IMR-90 (cell line): ENCODE measurements at regions of chr7 and their contacts with region 1.

Region 1: DNA sequence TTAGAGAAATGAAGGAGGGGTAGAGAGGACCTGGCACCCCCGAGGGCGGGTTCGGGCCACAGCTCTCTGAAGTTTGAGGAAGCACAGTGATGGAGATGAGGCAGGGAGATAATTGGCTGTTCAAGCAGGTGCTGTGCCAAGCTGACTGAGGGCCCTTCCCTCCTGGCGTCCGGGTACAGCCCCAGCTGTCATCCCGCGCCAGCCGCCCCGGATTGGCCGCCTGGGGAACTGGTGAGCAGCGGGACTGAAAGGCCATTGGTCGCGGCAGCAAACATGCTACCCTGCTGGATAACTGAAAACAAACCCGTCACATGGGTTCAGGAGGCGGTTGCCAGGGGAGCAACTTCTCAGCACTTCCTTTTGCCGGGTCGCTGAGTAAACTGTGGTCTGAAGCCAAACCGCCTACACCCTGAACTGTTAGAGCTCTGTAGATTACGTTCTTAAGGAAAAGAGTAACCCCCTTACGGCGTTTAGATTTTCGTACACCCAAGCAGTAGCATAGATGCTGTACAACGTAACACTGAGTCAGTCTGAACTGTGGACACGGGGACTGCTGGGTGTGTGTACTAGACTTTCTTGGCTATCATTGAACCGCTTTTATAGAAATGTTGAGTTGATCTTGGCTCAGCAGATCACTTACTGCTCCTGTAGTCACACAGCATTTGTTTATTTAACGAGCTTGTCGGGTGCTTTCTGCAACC is 1.3 kb downstream of the INSIG1 start:
- DNase-seq: peak; percentile 98
- ATAC-seq: peak; percentile 69
- H3K4me3 ChIP-seq: peak overlapping the region; percentile 55
- H3K27ac ChIP-seq: no peak overlapping the region
- H3K4me1 ChIP-seq: peaks cover 4% of the 10 kb centered on the region
- H3K27me3 ChIP-seq: no peaks in the 10 kb centered on the region
- CTCF ChIP-seq: no peak
- POLR2A ChIP-seq: peak; percentile 55
- RAD21 ChIP-seq: no peak

Region 2: DNA sequence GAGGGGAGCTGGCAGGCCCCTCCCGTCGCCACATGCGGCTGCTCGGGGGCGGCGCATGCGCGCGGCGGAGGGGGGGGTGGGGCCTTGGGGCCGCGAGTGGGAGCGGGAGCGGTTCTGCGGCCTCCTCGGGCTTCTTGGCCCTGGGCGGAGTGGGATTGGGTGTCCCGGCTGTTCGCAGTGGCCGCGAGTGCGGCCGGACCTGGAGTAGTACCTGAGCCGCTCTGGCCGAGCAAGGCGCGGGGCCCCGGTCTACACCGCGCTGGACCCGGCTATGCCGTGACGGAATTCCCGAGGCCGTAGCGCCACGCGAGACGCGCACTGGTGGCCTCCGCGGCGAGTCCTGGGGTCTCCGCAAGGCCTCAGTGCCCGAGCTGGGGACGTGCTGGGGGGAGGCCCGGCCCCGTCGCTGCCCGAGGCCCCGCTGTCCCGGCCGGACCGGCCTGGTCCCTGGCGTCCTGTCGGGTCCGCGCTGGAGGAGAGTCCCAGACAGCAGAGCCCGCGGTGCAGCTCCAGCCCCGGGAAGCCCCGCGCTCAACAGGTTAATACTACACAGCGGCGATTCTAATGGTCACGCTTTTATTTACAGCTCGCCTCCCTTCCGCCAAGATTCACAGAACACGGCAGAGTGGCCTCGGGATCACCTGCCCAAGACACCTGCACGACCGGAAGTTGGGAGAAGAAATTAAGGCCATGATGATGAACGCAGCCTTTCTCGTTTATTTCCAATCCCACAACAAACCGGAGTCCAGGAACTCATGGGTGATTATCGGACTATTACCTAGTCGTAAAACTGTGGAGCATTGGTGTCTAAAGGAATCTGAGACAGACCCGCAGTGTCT is 295.4 kb before region 1 on chr7:
- CTCF ChIA-PET with region 1: no interaction called
- POLR2A ChIA-PET with region 1: no interaction called
- dilution Hi-C with region 1: no loop called
- in situ Hi-C with region 1: no loop called
- intact Hi-C with region 1: loop called (anchors 1 kb)
- DNase-seq: peak; percentile 71
- ATAC-seq: peak; percentile 94
- H3K4me3 ChIP-seq: peak overlapping the region; percentile 80
- H3K27ac ChIP-seq: peak overlapping the region; percentile 81
- H3K4me1 ChIP-seq: 0 out of 2 replicates have a peak, but pooled peaks cover 1% of the 10 kb centered on the region
- H3K27me3 ChIP-seq: no peaks in the 10 kb centered on the region
- CTCF ChIP-seq: no peak
- POLR2A ChIP-seq: no peak; the same call in 1 of the 2 replicates
- RAD21 ChIP-seq: no peak

Region 3: DNA sequence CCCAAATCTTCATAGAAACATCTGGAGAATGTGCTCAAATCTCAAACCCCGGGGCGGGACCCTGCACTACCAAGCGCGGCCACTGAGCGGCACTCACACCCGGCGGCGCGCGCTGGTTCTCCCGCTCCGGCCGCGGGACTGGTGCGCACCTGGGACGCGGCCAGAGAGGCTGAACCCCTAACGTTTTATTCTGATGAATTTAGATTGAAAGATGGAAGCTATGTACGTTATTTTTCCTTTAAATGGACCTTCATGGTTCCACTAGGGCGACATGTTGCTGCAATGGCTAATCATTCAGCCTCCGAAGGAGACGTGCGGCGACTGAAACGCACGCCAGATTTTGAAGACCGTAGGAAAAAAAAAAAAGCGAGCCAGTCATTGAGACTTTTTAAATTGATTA is 108.3 kb before region 1 on chr7:
- CTCF ChIA-PET with region 1: interaction called, 15 read pairs
- POLR2A ChIA-PET with region 1: no interaction called
- dilution Hi-C with region 1: no loop called
- in situ Hi-C with region 1: no loop called
- intact Hi-C with region 1: loop called (anchors 1 kb)
- DNase-seq: no peak
- ATAC-seq: peak; percentile 97
- H3K4me3 ChIP-seq: no peak overlapping the region
- H3K27ac ChIP-seq: no peak overlapping the region
- H3K4me1 ChIP-seq: no peaks in the 10 kb centered on the region
- H3K27me3 ChIP-seq: peaks cover 2% of the 10 kb centered on the region
- CTCF ChIP-seq: peak; percentile 83
- POLR2A ChIP-seq: no peak
- RAD21 ChIP-seq: peak; percentile 94

Region 4: DNA sequence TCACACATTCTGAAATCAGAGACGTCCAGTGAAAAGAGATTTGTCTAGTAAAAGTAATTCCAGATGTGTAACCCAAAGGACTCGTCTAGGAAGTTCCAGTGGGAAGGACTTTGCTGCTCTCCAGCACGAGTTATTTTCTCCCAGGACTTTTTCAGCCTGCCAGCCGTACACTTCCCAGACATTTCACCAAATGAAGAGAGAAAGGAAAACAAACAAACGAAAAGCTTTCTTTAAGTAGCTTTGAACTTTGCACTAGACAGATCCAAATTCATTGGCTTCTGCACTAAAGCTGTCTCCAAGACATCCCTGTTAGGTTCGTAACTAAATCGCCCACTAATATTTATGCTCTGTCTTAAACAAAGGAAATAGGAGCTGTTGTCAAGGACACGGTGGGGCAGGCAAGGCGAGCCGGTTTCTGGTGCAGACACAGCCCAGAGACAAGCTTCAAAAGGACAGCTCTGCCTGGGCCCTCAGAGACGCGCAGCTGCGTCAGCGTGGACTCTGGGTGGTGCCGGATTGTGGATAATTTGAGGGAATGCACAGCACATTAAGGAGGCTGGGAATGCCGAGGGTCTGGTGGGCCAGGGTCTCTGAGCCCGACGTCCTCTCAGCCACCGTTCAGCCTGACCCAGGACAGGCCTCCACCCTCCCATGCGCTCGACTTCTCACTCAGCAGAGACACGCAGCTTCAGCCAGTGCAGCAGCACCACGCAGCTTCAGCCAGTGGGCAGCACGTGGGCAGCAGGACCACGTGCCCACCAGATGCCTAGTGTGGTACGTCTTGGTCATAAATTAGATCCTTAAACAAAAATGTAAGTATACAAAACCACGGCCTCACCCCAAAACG is 65.5 kb before region 1 on chr7:
- CTCF ChIA-PET with region 1: no interaction called
- POLR2A ChIA-PET with region 1: no interaction called
- dilution Hi-C with region 1: no loop called
- in situ Hi-C with region 1: no loop called
- intact Hi-C with region 1: loop called (anchors 1 kb)
- DNase-seq: peak; percentile 67
- ATAC-seq: peak; percentile 26
- H3K4me3 ChIP-seq: no peak overlapping the region
- H3K27ac ChIP-seq: no peak overlapping the region
- H3K4me1 ChIP-seq: peaks cover 11% of the 10 kb centered on the region
- H3K27me3 ChIP-seq: peaks cover 1% of the 10 kb centered on the region; the same call in 1 of the 2 replicates
- CTCF ChIP-seq: no peak
- POLR2A ChIP-seq: no peak
- RAD21 ChIP-seq: no peak

Region 5: GRCh38 chr7:155257482-155258225 is 41.3 kb before region 1 on chr7:
- CTCF ChIA-PET with region 1: no interaction called
- POLR2A ChIA-PET with region 1: no interaction called
- dilution Hi-C with region 1: no loop called
- in situ Hi-C with region 1: no loop called
- intact Hi-C with region 1: no loop called
- DNase-seq: no peak
- ATAC-seq: no peak
- H3K4me3 ChIP-seq: no peak overlapping the region
- H3K27ac ChIP-seq: no peak overlapping the region
- H3K4me1 ChIP-seq: no peaks in the 10 kb centered on the region
- H3K27me3 ChIP-seq: peaks cover 3% of the 10 kb centered on the region; the same call in 1 of the 2 replicates
- CTCF ChIP-seq: no peak
- POLR2A ChIP-seq: no peak
- RAD21 ChIP-seq: no peak

Region 6: DNA sequence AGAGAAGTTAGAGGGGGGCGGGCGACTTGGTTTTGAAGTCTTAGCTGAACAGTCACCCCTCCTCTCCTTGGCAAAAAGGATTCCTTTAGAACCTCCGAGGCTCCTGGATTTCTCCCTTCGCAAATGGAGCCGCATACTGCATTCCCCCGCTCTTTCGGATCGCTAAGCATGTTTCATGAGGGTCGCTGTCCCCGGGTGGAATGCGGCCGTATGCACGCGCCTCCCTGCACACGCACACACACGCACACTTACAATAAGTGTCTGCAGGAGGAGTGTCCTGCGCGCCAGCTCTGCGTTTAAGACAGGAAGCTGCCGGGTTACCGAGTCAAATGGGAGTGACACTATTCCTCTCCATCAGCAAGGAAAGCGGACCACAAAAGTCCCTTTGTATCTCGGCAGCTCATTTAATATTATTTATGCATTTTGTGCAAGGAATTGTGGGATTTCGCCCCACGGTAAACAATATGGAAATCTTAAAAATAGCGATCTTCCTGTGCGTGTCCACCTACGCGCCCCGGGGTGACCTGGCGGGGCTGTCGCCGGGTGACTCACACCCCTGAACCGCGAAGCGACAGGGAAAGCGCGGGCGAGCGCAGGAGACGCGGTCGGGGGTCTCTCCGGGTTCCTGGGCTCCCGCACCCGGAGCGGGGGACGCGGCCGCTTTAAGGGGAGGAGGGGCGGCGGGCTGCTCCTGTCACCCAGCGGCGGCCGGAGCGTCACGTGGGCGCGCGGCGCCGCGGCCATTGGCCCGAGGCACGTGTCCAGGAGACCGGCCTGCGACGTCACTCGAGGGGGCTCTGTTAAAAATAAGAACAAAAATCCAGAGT is 158.0 kb after region 1 on chr7:
- CTCF ChIA-PET with region 1: no interaction called
- POLR2A ChIA-PET with region 1: no interaction called
- dilution Hi-C with region 1: no loop called
- in situ Hi-C with region 1: no loop called
- intact Hi-C with region 1: loop called (anchors 10 kb)
- DNase-seq: peak; percentile 31
- ATAC-seq: peak; percentile 69
- H3K4me3 ChIP-seq: peak overlapping the region; percentile 34
- H3K27ac ChIP-seq: no peak overlapping the region
- H3K4me1 ChIP-seq: no peaks in the 10 kb centered on the region
- H3K27me3 ChIP-seq: peaks cover 90% of the 10 kb centered on the region
- CTCF ChIP-seq: no peak
- POLR2A ChIP-seq: no peak
- RAD21 ChIP-seq: no peak